Activated CD4-positive, alpha-beta memory T cell treated with anti-CD3 and anti-CD28 coated beads for 36 hours (primary cell): ENCODE measurements at regions of chr17 and their contacts with region 1.

Region 1: GRCh38 chr17:74379495-74380085 is 12.3 kb downstream of the GPR142 start:
- DNase-seq: peak; percentile 94
- H3K4me3 Mint-ChIP-seq: no peak overlapping the region
- H3K27ac Mint-ChIP-seq: no peak overlapping the region
- H3K4me1 Mint-ChIP-seq: no peaks in the 10 kb centered on the region
- H3K27me3 Mint-ChIP-seq: peaks cover 1% of the 10 kb centered on the region

Region 2: GRCh38 chr17:74270333-74270732 is 109.3 kb before region 1 on chr17:
- CTCF ChIA-PET with region 1: no interaction called
- POLR2A ChIA-PET with region 1: no interaction called
- intact Hi-C with region 1: no loop called
- DNase-seq: no peak
- H3K4me3 Mint-ChIP-seq: no peak overlapping the region
- H3K27ac Mint-ChIP-seq: peak overlapping the region; percentile 49
- H3K4me1 Mint-ChIP-seq: peaks cover 23% of the 10 kb centered on the region
- H3K27me3 Mint-ChIP-seq: peaks cover 2% of the 10 kb centered on the region

Region 3: DNA sequence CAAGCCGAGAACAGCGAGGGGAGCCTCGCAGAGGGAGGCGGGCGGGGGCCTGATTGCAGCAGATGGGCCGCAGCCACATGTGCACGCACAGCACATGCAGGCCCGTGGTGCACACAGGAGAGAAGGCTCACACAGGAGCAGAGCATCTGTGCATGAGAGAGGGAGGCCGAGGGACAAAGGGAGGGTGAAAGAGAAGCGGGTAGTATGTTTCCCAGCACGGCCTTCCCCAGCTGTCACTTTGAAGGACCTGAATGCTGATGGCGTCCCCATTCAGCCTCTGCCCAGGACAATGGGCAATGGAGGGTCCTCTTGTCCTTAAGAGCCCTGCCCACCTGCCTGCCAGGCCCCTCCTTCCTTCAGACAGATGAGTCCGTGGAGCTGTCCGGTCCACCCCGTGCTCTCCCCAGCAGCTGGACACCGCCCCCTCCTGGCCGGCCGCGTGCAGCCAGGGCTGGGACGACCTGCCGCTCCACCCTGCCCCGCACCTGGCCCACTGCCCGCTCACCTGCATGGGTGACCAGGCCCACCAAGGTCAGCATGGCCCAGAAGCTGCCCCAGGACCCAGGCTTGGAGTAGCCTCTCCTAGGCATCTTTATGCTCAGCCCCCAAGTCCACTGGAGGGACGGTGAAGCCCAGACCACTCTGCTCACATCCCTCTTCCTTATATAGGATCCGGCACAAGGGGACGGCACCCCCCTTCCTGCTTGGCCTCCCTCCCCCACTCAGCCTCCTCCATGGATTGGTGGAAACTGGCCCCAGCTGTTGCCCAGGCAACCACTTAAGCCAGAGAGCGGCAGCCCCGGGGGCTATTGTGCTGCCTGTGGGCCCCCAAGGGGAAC is 18.1 kb before region 1 on chr17 and contains the start of gene BTBD17:
- CTCF ChIA-PET with region 1: interaction called, 16 read pairs
- POLR2A ChIA-PET with region 1: no interaction called
- intact Hi-C with region 1: no loop called
- DNase-seq: peak; percentile 63
- H3K4me3 Mint-ChIP-seq: no peak within 1 kb of the TSS
- H3K27ac Mint-ChIP-seq: no peak within 1 kb of the TSS
- H3K4me1 Mint-ChIP-seq: peaks cover 2% of the 10 kb centered on the region
- H3K27me3 Mint-ChIP-seq: peaks cover 23% of the 10 kb centered on the region
- total RNA-seq, gene BTBD17: not detected

Region 4: DNA sequence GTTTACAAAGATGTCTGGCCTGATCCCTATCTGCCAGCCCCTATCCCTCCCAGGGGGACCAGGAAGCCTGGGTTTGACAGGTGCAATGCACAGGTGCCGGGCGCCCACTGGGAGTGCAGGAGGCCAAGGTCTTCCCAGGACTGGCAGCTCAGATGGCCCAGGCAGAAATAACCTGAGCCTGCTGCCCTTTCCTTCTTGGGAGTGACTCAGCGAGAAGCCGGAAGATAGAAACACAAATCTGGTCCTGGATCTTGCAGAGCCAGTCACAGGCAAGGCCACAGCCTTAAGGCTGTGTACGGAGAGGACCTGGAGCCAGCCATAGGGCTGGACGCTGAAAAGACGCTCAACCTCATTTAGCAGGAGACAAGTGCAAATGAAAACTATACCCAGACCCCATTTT is 15.4 kb after region 1 on chr17:
- CTCF ChIA-PET with region 1: interaction called, 15 read pairs
- POLR2A ChIA-PET with region 1: no interaction called
- intact Hi-C with region 1: no loop called
- DNase-seq: no peak
- H3K4me3 Mint-ChIP-seq: no peak overlapping the region
- H3K27ac Mint-ChIP-seq: no peak overlapping the region
- H3K4me1 Mint-ChIP-seq: no peaks in the 10 kb centered on the region
- H3K27me3 Mint-ChIP-seq: peaks cover 2% of the 10 kb centered on the region

Region 5: GRCh38 chr17:74493381-74493833 is 113.8 kb after region 1 on chr17:
- CTCF ChIA-PET with region 1: interaction called, 41 read pairs
- POLR2A ChIA-PET with region 1: no interaction called
- intact Hi-C with region 1: loop called (anchors 1 kb)
- DNase-seq: peak; percentile 80
- H3K4me3 Mint-ChIP-seq: no peak overlapping the region
- H3K27ac Mint-ChIP-seq: no peak overlapping the region
- H3K4me1 Mint-ChIP-seq: peaks cover 2% of the 10 kb centered on the region
- H3K27me3 Mint-ChIP-seq: peaks cover 2% of the 10 kb centered on the region

Region 6: GRCh38 chr17:74528491-74529199 is 149.1 kb after region 1 on chr17:
- CTCF ChIA-PET with region 1: interaction called, 13 read pairs
- POLR2A ChIA-PET with region 1: no interaction called
- intact Hi-C with region 1: no loop called
- DNase-seq: peak; percentile 7
- H3K4me3 Mint-ChIP-seq: no peak overlapping the region
- H3K27ac Mint-ChIP-seq: no peak overlapping the region
- H3K4me1 Mint-ChIP-seq: peaks cover 2% of the 10 kb centered on the region
- H3K27me3 Mint-ChIP-seq: peaks cover 26% of the 10 kb centered on the region

Region 7: DNA sequence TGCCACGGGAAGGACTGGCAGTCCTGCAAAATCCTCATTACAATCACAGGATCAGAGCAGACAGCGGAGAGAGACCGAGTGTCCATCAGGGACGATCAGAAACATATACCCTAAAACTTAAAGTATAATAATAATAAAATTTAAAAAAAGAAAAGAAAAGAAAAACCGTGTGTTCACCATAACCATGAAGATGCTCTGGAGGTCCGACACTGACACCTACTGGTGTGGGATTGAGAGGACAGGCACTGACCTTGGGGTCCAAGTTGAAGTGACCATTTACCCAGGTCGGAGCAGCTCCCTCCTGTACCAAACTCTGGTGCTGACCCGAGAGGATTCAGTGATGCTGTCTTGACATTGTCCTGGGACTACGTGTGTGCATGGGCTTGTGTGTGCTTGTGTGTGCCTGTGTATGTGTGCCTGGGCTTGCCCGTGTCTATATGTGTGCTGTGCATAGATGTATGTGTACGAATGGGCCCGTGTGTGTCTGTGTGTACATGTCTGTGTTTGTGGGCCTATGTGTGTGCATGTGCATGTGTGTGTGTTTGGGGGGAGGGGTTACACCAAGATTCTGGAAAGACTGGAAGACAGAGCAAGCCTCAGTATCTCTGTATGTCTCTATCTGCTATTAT is 222.5 kb after region 1 on chr17:
- CTCF ChIA-PET with region 1: interaction called, 17 read pairs
- POLR2A ChIA-PET with region 1: no interaction called
- intact Hi-C with region 1: loop called (anchors 5 kb)
- DNase-seq: peak; percentile 51
- H3K4me3 Mint-ChIP-seq: no peak overlapping the region
- H3K27ac Mint-ChIP-seq: no peak overlapping the region
- H3K4me1 Mint-ChIP-seq: peaks cover 3% of the 10 kb centered on the region
- H3K27me3 Mint-ChIP-seq: peaks cover 29% of the 10 kb centered on the region

Region 8: DNA sequence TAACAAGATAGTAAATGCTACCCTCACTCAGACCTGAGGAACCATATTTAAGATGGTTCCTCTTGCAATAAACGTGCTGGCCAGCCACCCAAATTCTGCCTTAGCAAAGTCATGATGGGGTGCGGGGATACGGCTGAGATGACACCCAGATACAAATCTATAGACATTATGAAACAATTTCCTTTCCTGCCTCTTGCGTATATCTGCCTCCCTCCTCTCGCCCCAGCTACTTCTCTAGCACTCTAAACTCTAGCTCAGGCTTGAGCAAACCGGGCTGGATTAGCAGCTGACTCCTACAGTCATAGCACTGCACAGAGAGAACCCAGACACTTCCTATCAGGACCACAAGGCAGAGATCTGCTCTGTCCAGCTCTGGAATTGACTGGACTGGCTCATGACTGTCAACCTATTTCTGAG is 310.8 kb after region 1 on chr17:
- CTCF ChIA-PET with region 1: no interaction called
- POLR2A ChIA-PET with region 1: no interaction called
- intact Hi-C with region 1: no loop called
- DNase-seq: no peak
- H3K4me3 Mint-ChIP-seq: no peak overlapping the region
- H3K27ac Mint-ChIP-seq: no peak overlapping the region
- H3K4me1 Mint-ChIP-seq: peaks cover 4% of the 10 kb centered on the region
- H3K27me3 Mint-ChIP-seq: no peaks in the 10 kb centered on the region